B cell (primary cell): ENCODE measurements at regions of chr19 and their contacts with region 1.

Region 1: GRCh38 chr19:1490311-1491113 is at the start of gene PCSK4:
- DNase-seq: peak; percentile 99
- ATAC-seq: peak; percentile 83
- H3K4me3 ChIP-seq: peak within 1 kb of the TSS; percentile 39 to 71 (median 52)
- H3K4me3 Mint-ChIP-seq: peak within 1 kb of the TSS; percentile 90
- H3K27ac ChIP-seq: peak within 1 kb of the TSS in 1 of 2 donors; percentile 14
- H3K27ac Mint-ChIP-seq: peak within 1 kb of the TSS; percentile 84
- H3K4me1 ChIP-seq: peaks cover 14 to 17% of the 10 kb centered on the region in 2 donors
- H3K4me1 Mint-ChIP-seq: peaks cover 15% of the 10 kb centered on the region
- H3K27me3 ChIP-seq: peaks cover 0 to 7% (median 1%) of the 10 kb centered on the region in 4 experiments
- H3K27me3 Mint-ChIP-seq: no peaks in the 10 kb centered on the region
- CTCF ChIP-seq: no peak
- total RNA-seq, gene PCSK4: 1.3 and 1.7 TPM in 2 replicates

Region 2: DNA sequence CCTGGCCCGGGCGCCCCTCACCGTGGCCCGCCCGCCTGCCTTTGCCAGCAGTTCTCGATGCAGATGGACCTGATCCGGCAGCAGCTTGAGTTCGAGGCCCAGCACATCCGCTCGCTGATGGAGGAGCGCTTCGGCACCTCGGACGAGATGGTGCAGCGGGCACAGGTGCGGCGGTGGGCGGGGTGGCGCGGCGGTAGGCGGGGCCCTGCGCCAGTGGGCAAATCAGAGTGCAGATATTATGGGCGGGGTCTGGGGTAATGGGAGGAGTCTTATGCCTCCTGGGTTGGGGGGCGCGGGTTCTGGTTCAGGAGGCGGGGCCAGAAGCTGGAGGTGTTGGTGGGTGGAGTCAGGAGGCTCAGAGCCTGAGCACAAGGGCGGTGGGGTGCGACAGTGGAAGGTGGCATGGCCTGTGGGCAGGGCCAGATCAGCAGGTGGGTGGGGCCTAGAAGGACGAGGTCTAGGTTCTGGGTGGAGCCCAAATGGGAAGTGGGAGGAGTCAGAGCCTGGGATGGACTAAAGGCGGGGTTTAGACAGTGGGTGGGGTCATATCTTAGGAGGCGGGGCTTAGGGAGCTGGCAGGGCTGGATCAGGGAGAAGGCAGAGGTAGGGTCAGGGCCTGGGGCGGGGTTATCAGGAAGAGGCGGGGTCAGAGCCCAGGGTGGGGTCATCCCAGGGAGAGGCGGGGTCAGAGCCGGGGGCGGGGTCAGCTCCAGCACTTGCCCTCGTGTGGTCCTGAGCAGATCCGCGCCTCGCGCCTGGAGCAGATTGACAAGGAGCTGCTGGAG is 35.0 kb before region 1 on chr19:
- CTCF ChIA-PET with region 1: no interaction called
- POLR2A ChIA-PET with region 1: interaction called, 7 read pairs
- intact Hi-C with region 1: loop called (anchors 2 kb)
- DNase-seq: peak; percentile 68
- ATAC-seq: peak; percentile 67
- H3K4me3 ChIP-seq: peak overlapping the region in 3 of 5 experiments; percentile 12 to 29 (median 15)
- H3K4me3 Mint-ChIP-seq: peak overlapping the region; percentile 66
- H3K27ac ChIP-seq: no peak overlapping the region
- H3K27ac Mint-ChIP-seq: no peak overlapping the region
- H3K4me1 ChIP-seq: peaks cover 33 to 35% of the 10 kb centered on the region in 2 donors
- H3K4me1 Mint-ChIP-seq: peaks cover 21% of the 10 kb centered on the region
- H3K27me3 ChIP-seq: peaks cover 0 to 69% (median 41%) of the 10 kb centered on the region in 4 experiments
- H3K27me3 Mint-ChIP-seq: peaks cover 34% of the 10 kb centered on the region
- CTCF ChIP-seq: no peak

Region 3: DNA sequence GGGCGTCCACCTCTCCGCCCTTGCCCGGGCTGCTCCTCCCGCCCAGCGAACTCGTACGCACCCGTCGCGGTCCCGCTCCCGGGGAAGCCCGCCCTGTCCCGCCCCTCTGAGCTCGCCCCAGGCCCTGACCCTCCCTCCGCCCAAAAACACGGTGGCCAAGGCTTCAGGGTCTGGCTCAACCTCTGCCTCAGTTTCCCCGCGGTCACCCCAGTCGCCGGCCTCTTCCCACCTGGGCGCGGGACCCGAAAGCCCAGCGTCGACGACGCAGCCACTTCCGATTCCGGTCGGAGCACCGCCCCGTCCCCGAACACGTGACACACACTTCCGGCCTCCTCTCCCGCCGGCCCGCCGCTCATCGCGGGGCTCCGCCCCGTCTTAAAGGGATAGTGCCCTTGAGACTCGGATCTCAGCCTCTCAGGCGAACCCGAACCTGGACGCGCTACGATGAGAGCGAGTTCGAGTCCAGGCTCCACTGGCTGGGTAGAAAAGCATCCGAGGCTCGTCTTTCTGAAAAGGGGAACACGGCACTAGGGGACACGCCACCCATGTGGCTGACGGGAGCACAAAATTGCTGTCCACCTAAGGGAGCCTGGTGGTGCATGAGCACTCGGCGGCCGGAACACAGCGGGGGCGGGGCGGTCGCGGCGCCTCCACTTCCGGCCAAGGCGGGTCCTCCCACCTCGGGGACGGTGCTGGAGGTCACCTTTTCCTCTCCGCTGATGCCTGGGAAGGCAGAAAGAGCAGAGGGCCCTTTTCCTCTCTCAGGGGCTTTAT is 11.4 kb before region 1 on chr19 and contains the start of gene C19orf25:
- CTCF ChIA-PET with region 1: no interaction called
- POLR2A ChIA-PET with region 1: interaction called, 8 read pairs
- intact Hi-C with region 1: loop called (anchors 1 kb)
- DNase-seq: peak; percentile 94
- ATAC-seq: peak; percentile 94
- H3K4me3 ChIP-seq: peak within 1 kb of the TSS; percentile 50 to 92 (median 79)
- H3K4me3 Mint-ChIP-seq: peak within 1 kb of the TSS; percentile 97
- H3K27ac ChIP-seq: peak within 1 kb of the TSS; percentile 71 to 83
- H3K27ac Mint-ChIP-seq: peak within 1 kb of the TSS; percentile 93
- H3K4me1 ChIP-seq: peaks cover 6 to 22% of the 10 kb centered on the region in 2 donors
- H3K4me1 Mint-ChIP-seq: peaks cover 13% of the 10 kb centered on the region
- H3K27me3 ChIP-seq: no peaks in the 10 kb centered on the region
- H3K27me3 Mint-ChIP-seq: no peaks in the 10 kb centered on the region
- CTCF ChIP-seq: no peak
- total RNA-seq, gene C19orf25: 68.1 and 68.3 TPM in 2 replicates

Region 4: GRCh38 chr19:1568320-1569019 is 78.0 kb after region 1 on chr19 and contains the start of gene MEX3D:
- CTCF ChIA-PET with region 1: no interaction called
- POLR2A ChIA-PET with region 1: no interaction called
- intact Hi-C with region 1: loop called (anchors 1 kb)
- DNase-seq: peak; percentile 90
- ATAC-seq: peak; percentile 94
- H3K4me3 ChIP-seq: peak within 1 kb of the TSS in 3 of 5 experiments; percentile 29 to 56 (median 38)
- H3K4me3 Mint-ChIP-seq: peak within 1 kb of the TSS; percentile 66
- H3K27ac ChIP-seq: no peak within 1 kb of the TSS
- H3K27ac Mint-ChIP-seq: peak within 1 kb of the TSS; percentile 41
- H3K4me1 ChIP-seq: peaks cover 11 to 13% of the 10 kb centered on the region in 2 donors
- H3K4me1 Mint-ChIP-seq: peaks cover 2% of the 10 kb centered on the region
- H3K27me3 ChIP-seq: peaks cover 0 to 18% (median 0%) of the 10 kb centered on the region in 4 experiments
- H3K27me3 Mint-ChIP-seq: peaks cover 3% of the 10 kb centered on the region
- CTCF ChIP-seq: no peak
- total RNA-seq, gene MEX3D: 3.0 and 4.2 TPM in 2 replicates

Region 5: DNA sequence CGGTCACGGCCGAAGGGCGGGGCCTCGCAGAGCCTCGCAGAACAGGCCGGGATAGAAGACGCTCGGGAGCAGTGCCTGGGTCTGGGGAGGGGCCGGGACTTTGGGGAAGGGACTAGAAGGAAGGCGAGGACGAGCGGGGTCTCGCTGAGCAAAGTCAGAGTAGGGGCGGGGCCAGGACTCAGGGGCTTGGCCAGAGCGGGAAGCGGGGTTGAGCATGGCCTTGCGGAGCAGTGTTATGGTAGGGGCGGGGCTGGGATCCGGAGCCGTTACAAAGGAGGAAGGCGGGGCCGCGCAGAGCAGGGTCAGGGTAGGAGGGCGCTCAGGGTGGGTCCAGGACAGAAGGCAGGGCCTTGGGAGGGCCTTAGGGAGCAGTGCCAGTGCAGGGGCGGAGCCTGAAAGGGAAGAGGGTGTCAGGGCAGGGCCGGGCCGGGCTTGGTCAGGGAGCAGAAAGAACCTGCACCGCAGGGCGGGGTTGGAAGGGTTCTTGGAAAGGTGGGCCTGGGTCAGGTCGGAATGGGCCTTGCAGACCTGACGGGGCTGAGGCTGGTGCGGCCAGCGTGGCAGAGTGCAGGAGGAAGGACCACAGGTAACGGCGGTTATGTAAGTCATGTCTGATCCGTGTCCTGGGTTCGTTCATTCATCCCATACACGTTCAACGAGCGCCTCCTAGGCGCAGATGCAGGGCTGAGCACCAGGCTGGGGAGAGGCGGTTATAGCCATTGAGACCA is 322.1 kb after region 1 on chr19:
- CTCF ChIA-PET with region 1: interaction called, 3 read pairs
- POLR2A ChIA-PET with region 1: no interaction called
- intact Hi-C with region 1: loop called (anchors 1 kb)
- DNase-seq: peak; percentile 93
- ATAC-seq: peak; percentile 79
- H3K4me3 ChIP-seq: peak overlapping the region; percentile 35 to 73 (median 61)
- H3K4me3 Mint-ChIP-seq: peak overlapping the region; percentile 97
- H3K27ac ChIP-seq: peak overlapping the region in 1 of 2 donors; percentile 0
- H3K27ac Mint-ChIP-seq: peak overlapping the region; percentile 87
- H3K4me1 ChIP-seq: peaks cover 9 to 19% of the 10 kb centered on the region in 2 donors
- H3K4me1 Mint-ChIP-seq: peaks cover 12% of the 10 kb centered on the region
- H3K27me3 ChIP-seq: no peaks in the 10 kb centered on the region
- H3K27me3 Mint-ChIP-seq: no peaks in the 10 kb centered on the region
- CTCF ChIP-seq: peak; percentile 68